ENCODE measurements at regions of chr7 and their contacts with region 1.

Region 1: DNA sequence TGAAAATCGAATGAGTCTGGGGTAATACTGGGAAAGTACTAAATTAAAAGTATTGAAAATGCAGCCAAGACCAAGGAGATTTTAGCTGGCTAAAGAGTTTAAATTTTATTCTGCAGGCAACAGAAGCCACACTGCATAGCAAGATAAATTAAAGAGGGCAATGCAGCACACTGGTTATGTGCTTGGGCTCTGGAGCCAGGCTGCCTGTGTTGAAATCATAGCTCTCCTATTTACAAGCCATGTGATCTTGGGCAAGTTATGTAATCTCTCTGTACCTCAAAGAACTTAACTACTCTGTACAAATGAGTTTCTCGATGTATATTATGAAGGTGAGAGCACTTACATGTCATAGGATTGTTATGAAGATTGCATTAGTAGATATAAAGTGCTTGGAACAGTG is 9.9 kb downstream of the SLC25A13 start:
- DNase-seq: peak; percentile 48
- ATAC-seq: peak; percentile 74 to 89

Region 2: GRCh38 chr7:96236198-96237039 is 75.5 kb before region 1 on chr7:
- intact Hi-C with region 1: loop called in 1 of 2 experiments (anchors 10 kb)
- DNase-seq: peak; percentile 74
- ATAC-seq: peak; percentile 82 to 92

Region 3: DNA sequence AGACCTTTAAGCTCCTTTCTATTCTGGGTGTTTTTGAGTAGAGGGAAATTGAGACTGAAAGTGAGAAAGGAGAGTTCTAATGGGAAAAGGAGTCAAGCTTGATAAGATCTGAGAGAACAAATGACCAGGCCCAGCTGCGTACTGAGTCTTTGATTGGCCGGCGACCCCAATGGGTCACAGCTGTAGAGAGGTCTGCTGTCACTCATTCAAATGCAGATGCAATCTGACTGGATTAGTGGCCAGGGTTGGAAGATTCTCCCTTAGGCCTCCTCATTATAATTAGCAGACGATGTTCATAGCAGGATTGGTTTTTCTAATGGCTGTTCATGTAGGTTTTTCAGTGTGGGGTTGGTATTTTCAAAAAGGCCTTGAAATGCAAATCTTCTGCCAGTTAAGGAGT is 137.1 kb after region 1 on chr7:
- intact Hi-C with region 1: no loop called
- DNase-seq: no peak
- ATAC-seq: no peak